ENCODE measurements at regions of chr1 and their contacts with region 1.

Region 1: DNA sequence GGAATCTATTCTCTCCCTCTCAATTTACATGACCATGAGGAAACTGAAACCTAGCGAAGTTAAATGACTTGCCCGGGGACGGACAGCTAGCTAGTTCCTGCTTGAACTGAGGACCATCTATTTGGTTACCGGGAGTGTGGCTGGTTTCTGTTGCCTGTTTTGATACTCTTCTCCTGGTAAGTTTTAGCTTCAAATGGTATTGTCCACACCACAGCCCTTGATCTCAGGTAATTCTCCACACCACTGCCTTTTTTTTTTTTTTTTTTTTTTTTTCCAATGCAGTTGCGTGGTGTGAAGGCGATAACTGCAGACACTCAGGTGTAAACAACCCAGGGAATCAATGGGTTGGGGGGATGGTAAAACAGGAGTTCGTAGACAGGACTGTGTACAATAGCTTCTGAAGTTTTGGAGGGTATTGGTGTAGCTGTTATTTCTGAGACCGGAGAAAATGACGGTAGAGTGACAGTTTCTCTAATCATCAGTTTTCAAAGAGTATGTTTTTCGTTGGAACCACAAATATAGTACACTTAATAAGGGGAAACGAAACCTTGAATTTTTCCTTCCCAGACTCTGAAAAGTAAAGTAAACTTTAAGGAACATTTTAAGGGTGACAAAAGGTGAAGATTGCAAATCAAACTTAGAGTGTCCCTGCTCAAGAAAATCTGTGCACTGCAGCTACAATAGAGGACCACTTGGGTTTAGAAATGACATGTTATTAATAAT is 125.3 kb upstream of the CACYBP start:
- DNase-seq: peak; percentile 55
- H3K4me3 Mint-ChIP-seq: peak overlapping the region; percentile 72
- H3K27ac Mint-ChIP-seq: peak overlapping the region; percentile 83
- H3K4me1 Mint-ChIP-seq: peaks cover 44% of the 10 kb centered on the region
- H3K27me3 Mint-ChIP-seq: no peaks in the 10 kb centered on the region
- CTCF ChIP-seq: no peak

Region 2: GRCh38 chr1:174769961-174770549 is 104.4 kb before region 1 on chr1:
- CTCF ChIA-PET with region 1: no interaction called
- intact Hi-C with region 1: loop called (anchors 1 kb)
- DNase-seq: no peak
- H3K4me3 Mint-ChIP-seq: no peak overlapping the region
- H3K27ac Mint-ChIP-seq: no peak overlapping the region
- H3K4me1 Mint-ChIP-seq: peaks cover 30% of the 10 kb centered on the region
- H3K27me3 Mint-ChIP-seq: no peaks in the 10 kb centered on the region
- CTCF ChIP-seq: peak; percentile 43

Region 3: GRCh38 chr1:174800216-174800851 is 74.2 kb before region 1 on chr1:
- CTCF ChIA-PET with region 1: interaction called, 10 read pairs
- intact Hi-C with region 1: loop called (anchors 2 kb)
- DNase-seq: no peak
- H3K4me3 Mint-ChIP-seq: no peak overlapping the region
- H3K27ac Mint-ChIP-seq: no peak overlapping the region
- H3K4me1 Mint-ChIP-seq: peaks cover 11% of the 10 kb centered on the region
- H3K27me3 Mint-ChIP-seq: no peaks in the 10 kb centered on the region
- CTCF ChIP-seq: no peak

Region 4: DNA sequence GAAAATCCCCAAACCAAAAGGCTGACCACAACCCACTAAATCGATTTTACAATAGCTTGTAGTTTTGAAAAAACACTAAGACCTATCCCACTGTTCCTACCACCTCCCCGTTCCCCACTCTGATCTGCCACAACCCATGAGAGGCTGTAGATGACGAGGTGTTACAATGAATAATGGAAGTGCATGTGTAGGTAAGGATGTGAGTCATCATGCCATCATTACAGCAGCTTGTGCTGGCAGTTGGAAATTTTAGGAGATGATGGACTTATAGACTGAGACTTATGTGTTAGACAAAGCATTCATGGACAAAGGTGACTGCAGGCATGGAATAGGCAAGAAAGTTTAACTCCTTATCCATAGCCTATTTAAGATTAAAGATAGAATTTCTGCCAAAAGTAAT is 59.5 kb before region 1 on chr1:
- CTCF ChIA-PET with region 1: interaction called, 4 read pairs
- intact Hi-C with region 1: loop called (anchors 5 kb)
- DNase-seq: peak; percentile 45
- H3K4me3 Mint-ChIP-seq: no peak overlapping the region
- H3K27ac Mint-ChIP-seq: peak overlapping the region; percentile 76
- H3K4me1 Mint-ChIP-seq: peaks cover 47% of the 10 kb centered on the region
- H3K27me3 Mint-ChIP-seq: no peaks in the 10 kb centered on the region
- CTCF ChIP-seq: no peak

Region 5: GRCh38 chr1:174902531-174903099 is 28.1 kb after region 1 on chr1:
- CTCF ChIA-PET with region 1: interaction called, 3 read pairs
- intact Hi-C with region 1: loop called (anchors 1 kb)
- DNase-seq: peak; percentile 96
- H3K4me3 Mint-ChIP-seq: no peak overlapping the region
- H3K27ac Mint-ChIP-seq: peak overlapping the region; percentile 80
- H3K4me1 Mint-ChIP-seq: peaks cover 37% of the 10 kb centered on the region
- H3K27me3 Mint-ChIP-seq: no peaks in the 10 kb centered on the region
- CTCF ChIP-seq: no peak

Region 6: DNA sequence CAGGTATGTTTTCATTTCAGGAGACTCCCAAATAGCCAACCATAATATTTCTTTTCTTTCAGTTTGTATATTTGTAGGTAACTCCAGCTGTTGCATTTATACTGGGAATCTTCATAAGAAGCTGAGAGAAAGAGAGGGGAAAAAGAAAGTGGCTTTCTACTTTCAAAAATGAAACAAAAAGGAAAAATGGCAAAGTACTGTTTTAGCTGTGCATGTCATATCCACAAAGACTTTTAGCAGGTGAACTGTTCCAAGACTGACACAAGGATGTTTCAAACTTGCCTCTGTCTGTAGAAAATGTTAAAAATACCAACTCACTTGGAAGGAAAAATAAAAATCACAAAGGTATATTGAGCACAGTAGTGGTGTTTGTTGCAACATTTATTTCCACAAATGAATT is 83.3 kb after region 1 on chr1:
- CTCF ChIA-PET with region 1: interaction called, 11 read pairs
- intact Hi-C with region 1: no loop called
- DNase-seq: no peak
- H3K4me3 Mint-ChIP-seq: no peak overlapping the region
- H3K27ac Mint-ChIP-seq: no peak overlapping the region
- H3K4me1 Mint-ChIP-seq: peaks cover 27% of the 10 kb centered on the region
- H3K27me3 Mint-ChIP-seq: no peaks in the 10 kb centered on the region
- CTCF ChIP-seq: no peak

Region 7: DNA sequence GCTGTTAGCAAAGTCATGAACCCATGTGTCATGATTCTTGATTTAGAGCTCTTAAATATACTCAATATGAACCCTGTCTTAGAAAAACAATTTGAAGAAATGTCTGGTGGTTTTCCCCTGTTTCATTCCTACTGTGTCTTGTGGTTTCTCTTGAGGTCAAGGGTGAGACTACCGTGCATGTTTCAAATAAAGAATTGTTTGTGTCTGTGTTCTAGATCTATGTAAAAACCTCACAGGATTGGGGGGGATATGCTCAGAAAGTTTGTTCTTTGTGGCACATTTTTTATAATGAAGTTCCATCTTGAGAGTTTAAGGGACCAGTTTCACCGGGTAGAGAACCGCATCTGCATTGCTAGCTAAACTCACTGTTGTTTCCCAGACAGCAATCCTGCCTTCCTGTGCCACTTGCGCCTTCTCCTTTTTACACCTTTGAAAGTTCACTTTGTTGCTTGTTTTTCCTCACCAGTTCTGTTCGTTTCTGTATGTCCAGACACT is 94.3 kb after region 1 on chr1:
- CTCF ChIA-PET with region 1: interaction called, 11 read pairs
- intact Hi-C with region 1: loop called (anchors 1 kb)
- DNase-seq: peak; percentile 57
- H3K4me3 Mint-ChIP-seq: peak overlapping the region; percentile 1
- H3K27ac Mint-ChIP-seq: peak overlapping the region; percentile 81
- H3K4me1 Mint-ChIP-seq: peaks cover 76% of the 10 kb centered on the region
- H3K27me3 Mint-ChIP-seq: no peaks in the 10 kb centered on the region
- CTCF ChIP-seq: no peak

Measured in Calu3 (cell line).